ENCODE measurements at regions of chr11 and their contacts with region 1.

Region 1: GRCh38 chr11:66282468-66283386 is 4.8 kb downstream of the CNIH2 start:
- DNase-seq: peak; percentile 97 to 100 (median 98)
- H3K4me3 ChIP-seq: no peak overlapping the region
- H3K27ac ChIP-seq: no peak overlapping the region
- H3K4me1 ChIP-seq: peaks cover 6% of the 10 kb centered on the region
- H3K27me3 ChIP-seq: no peaks in the 10 kb centered on the region
- CTCF ChIP-seq: peak; percentile 97 to 99 (median 99)
- EP300 ChIP-seq: no peak
- POLR2A ChIP-seq: no peak

Region 2: DNA sequence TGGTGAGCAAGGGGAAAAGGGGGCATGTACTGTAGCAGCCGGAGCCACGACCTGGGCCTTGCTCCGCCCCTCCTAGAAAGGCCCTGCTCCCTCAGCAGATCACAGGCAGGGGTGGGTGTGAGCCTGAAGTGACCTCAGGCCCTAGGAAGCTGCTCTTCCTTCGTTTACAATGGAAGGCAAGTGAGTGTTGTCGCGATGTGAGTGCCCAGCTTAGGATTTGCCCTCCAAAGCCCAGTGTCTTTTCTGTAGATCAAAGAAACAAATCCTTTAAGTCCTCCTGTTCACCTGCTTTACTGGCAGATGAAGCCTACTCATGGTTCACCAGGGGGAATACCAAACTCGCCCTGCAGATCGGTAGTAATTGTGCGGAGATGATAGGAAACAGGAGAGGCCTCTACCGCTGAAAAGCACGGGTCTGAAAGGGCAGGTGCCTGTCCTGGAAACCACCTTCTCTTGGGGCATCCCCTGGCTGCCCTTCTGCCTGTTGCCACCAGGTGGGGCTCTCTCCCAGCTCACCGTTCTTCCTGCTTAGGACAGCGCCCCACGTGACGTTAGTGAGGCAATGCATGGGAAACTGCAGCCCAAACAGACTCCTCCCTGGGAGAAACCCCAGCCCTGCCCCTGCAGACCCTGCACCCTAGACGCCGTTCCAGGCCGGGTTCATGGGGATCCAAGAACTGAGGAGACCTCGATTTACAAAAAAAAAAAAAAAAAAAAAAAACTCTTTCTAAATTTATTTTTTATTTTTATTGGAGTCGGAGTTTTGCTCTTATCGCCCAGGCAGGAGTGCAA is 60.2 kb before region 1 on chr11:
- intact Hi-C with region 1: loop called in 3 of 4 experiments (anchors 1 to 10 kb)
- DNase-seq: peak; percentile 81 to 89 (median 87)
- H3K4me3 ChIP-seq: no peak overlapping the region
- H3K27ac ChIP-seq: no peak overlapping the region
- H3K4me1 ChIP-seq: no peaks in the 10 kb centered on the region
- H3K27me3 ChIP-seq: no peaks in the 10 kb centered on the region
- CTCF ChIP-seq: peak; percentile 88 to 99 (median 99)
- EP300 ChIP-seq: no peak
- POLR2A ChIP-seq: peak; percentile 17

Region 3: DNA sequence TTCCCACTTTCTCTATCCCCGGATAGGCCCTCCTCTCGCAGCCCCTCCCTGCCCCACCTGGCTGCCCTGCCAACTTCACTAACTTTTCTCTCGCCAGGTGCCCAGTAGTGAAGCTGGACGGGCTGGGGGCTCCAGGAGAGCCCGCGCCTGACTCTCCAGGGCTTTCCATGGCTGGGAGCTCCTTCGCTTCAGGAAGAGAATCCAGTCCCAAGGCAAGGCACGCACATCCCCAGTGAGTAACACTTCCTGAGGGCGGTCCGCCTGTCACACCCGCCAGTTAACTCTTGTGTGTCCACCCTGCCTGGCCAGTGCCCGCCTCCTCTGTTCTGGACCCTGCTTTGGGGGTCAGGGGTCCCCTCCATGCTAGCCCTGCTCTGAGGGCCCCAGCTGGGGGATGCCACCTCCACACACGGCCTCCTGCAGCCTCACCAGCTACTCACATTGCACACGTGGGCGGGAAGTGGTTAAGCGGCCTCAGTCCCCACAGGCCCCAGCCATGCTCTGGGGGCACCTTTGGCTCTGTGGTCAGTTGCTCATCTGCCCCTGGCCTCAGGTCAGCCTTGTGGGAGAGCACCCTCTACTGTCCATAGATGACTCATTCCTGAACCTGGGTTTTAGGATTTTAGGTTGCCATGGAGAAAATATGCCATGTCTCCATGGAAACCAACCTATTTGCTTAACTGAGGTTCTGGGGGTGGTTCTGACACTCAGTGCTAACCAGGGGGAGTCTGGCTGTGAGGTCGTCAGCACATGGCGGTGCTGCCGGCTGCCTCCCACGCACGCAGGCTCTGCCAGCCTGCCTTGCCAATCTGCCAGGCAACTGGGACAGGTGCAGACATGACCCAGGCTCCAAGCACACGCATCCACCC is 53.7 kb after region 1 on chr11 and contains the start of gene RIN1:
- intact Hi-C with region 1: loop called in 1 of 4 experiments (anchors 10 kb)
- DNase-seq: peak; percentile 57 to 73 (median 61)
- H3K4me3 ChIP-seq: peak within 1 kb of the TSS; percentile 44
- H3K27ac ChIP-seq: peak within 1 kb of the TSS; percentile 5 to 40
- H3K4me1 ChIP-seq: peaks cover 13% of the 10 kb centered on the region
- H3K27me3 ChIP-seq: no peaks in the 10 kb centered on the region
- CTCF ChIP-seq: peak in 2 of 3 donors; percentile 38 to 44
- EP300 ChIP-seq: no peak
- POLR2A ChIP-seq: no peak
- total RNA-seq, gene RIN1: 1.8 to 9.5 (median 6.3) TPM

Region 4: DNA sequence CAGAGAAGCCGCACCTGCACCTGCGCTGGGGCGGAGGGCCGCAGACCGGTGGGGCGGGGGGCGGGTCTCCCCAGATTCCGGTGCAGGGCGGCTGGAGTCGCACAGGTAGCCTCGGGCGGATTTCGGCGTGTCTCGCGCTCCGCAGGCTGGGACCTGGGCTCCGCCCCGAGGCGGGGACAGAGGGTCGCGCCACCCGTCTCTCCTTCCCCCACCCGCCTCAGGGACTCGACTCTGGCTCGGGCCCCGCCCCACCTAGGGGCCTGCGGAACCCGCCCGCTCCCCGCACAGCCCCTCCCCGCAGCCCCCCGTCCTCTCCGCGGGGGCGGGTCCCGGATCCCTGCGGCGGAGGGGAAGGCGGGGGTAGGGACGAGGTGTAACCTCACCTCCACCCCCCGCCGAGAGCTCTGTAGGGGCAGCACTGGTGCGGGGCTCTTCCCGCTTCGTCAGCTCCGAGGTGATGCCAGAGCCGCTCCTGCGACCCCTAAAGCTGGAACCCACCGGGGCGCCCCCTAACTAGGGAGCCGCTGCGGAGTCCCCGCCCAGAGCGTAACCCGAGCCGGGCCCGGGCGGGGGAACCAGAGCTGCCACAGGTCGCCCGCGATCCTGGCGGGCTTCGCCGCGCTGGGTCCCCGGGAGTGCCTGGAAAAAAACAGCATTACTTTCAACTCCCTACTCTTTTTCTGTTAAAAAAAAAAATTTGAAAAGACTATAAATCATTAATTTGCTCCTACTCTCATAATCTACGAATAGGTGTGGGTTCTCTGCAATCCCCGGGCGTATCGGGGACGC is 89.1 kb after region 1 on chr11 and contains the start of gene SLC29A2:
- intact Hi-C with region 1: no loop called
- DNase-seq: peak in 3 of 5 donors; percentile 17 to 52 (median 33)
- H3K4me3 ChIP-seq: peak within 1 kb of the TSS; percentile 43
- H3K27ac ChIP-seq: peak within 1 kb of the TSS; percentile 15 to 21
- H3K4me1 ChIP-seq: no peaks in the 10 kb centered on the region
- H3K27me3 ChIP-seq: no peaks in the 10 kb centered on the region
- CTCF ChIP-seq: no peak
- EP300 ChIP-seq: no peak
- POLR2A ChIP-seq: no peak
- total RNA-seq, gene SLC29A2: 0.48 to 3.1 (median 1.3) TPM

Region 5: DNA sequence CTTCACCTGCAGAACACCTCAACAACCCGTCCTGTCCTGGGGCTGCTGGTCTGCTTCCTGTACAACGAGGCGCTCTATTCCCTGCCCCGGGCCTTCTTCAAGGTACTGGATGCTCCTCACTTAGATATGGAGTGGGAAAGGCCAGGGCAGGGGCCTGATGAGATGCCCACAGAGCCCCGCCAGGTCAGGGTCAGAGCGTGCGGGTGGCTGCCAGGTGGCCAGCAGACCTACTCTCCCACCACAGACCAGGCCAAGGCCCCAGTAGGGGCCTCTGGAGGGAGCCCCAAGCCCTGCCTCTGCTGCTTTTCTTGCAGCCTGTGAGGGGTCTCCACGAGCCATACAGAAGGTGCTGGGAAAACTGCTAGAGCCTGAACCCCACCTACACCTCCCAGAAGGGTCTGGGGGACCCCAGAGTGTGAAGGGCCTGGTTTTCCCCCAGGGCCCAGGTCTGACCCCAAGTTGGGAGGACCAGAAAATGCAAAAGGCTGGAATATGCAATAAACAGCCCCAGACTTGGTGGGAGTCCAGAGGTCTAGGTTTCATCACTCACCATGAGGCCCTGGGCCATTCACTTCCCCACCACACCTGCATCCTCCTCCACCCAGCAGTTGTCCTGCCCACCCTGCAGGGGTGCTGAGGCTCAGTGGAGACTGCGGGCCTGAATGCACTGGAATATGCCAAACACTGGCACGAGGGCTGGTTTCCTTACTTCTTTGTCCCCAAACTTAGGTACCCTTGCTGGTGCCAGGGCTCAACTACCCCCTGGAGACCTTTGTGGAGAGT is 248.4 kb after region 1 on chr11:
- intact Hi-C with region 1: no loop called
- DNase-seq: no peak
- H3K4me3 ChIP-seq: no peak overlapping the region
- H3K27ac ChIP-seq: no peak overlapping the region
- H3K4me1 ChIP-seq: no peaks in the 10 kb centered on the region
- H3K27me3 ChIP-seq: no peaks in the 10 kb centered on the region
- CTCF ChIP-seq: no peak
- EP300 ChIP-seq: no peak
- POLR2A ChIP-seq: no peak